Activated T-helper 2 cell treated with anti-CD3 and anti-CD28 coated beads, Interferon-gamma antibody, Interleukin-2, Interleukin-4, amounts not matched to agents 10 μg/mL and 5 μg/mL and 100 μg/mL, durations not matched to agents 14 hours and 24 hours and 36 hours (primary cell): ENCODE measurements at regions of chr1 and their contacts with region 1.

Region 1: DNA sequence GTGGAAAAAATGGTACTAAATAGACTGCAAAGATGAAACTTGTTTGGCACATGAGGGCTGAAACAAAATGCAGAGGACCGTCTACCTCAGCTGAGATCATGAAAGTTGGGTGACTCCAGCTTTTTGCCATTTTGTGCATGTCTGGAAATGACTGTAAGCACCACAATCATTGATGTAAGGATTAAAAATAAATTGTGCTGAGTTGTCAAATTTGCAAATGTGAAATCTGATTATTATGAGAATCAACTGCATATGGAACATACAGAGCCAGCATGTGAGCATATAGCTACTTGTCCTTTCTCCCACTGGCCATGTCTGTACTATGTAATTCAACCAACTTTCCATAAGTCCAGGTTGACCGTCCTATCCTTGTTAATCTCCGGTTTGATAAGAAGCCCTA is 736.9 kb upstream of the PRMT6 start:
- DNase-seq: no peak
- H3K4me3 Mint-ChIP-seq: no peak overlapping the region
- H3K27ac Mint-ChIP-seq: no peak overlapping the region
- H3K4me1 Mint-ChIP-seq: no peaks in the 10 kb centered on the region
- H3K27me3 Mint-ChIP-seq: no peaks in the 10 kb centered on the region

Region 2: GRCh38 chr1:106022312-106022902 is 297.2 kb before region 1 on chr1:
- intact Hi-C with region 1: no loop called
- DNase-seq: no peak
- H3K4me3 Mint-ChIP-seq: no peak overlapping the region
- H3K27ac Mint-ChIP-seq: no peak overlapping the region
- H3K4me1 Mint-ChIP-seq: no peaks in the 10 kb centered on the region
- H3K27me3 Mint-ChIP-seq: no peaks in the 10 kb centered on the region

Region 3: DNA sequence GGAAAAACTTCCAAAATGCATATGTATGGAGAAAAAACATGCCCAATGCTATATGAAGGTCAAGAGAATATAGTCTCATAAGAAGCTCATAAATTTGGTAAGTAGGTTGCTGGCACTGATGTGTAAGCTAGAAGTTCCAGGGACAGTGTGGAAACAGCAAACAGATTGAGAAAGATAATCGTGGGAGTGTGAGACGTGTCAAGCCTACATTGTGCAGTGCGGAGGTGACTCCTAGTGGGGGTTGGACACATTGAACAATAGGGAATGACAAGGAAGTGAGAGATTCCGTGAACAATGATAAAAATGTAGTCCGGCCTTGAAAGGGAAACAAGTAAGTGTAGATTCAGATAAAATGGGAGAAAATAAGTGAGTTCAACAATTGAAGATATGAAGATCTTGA is 51.6 kb before region 1 on chr1:
- intact Hi-C with region 1: loop called (anchors 5 kb)
- DNase-seq: no peak
- H3K4me3 Mint-ChIP-seq: no peak overlapping the region
- H3K27ac Mint-ChIP-seq: no peak overlapping the region
- H3K4me1 Mint-ChIP-seq: no peaks in the 10 kb centered on the region
- H3K27me3 Mint-ChIP-seq: no peaks in the 10 kb centered on the region